Activated CD4-positive, alpha-beta memory T cell treated with anti-CD3 and anti-CD28 coated beads for 36 hours (primary cell): ENCODE measurements at regions of chrX and their contacts with region 1.

Region 1: DNA sequence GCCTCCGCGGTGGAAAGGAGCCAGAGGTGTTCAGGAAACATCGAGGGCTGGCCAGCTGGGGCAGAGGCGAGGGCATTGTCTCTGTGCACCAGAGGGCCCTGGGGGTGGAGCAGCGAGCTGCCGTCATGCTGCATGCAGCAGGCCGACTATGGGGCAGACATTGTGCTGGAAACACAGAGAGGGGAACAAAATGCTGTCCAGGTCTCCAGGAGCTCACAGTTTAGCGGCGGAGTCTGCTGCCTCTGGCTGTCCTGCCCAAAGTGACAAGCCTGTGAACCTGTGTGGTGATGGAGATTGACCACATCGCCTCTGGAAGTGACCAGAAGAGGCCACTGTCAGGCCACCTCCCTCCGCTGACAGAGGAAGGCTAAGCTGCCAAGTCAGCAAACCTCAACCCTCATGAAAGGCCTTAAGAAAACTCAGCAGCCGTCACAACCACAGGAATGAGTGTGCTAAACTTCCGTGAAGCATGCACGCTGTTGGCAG is 20.1 kb upstream of the SASH3 start:
- DNase-seq: peak; percentile 81
- H3K4me3 Mint-ChIP-seq: peak overlapping the region; percentile 46
- H3K27ac Mint-ChIP-seq: peak overlapping the region; percentile 90
- H3K4me1 Mint-ChIP-seq: peaks cover 57% of the 10 kb centered on the region
- H3K27me3 Mint-ChIP-seq: no peaks in the 10 kb centered on the region

Region 2: DNA sequence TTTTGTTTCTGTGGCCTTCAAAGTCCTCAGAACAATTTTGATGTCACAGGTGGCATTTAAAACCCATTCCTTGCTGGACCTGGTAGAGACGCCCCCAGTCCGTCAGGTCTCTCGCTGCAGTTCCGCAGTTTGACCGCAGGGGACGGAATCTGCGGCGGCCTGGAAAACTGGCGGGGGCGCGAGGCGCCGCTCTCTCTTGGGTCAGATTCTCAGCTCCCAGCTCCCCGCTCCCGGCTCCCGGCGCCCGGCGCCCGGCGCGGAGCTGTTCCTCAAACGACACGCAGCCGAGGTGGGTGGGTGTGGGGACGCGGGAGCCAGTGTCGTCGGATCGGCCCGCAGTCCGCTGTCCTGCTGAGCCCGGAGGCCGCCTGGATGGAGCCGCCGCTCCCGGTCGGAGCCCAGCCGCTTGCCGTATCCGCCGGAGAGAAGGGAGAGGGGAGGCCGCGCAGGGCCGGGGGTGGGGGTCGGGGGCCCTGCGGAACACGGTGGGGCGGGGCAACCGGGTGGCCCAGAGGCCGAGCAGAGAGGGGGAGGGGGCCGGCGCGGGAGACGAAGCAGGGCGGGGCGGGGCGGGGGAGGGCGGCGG is 219.5 kb before region 1 on chrX and contains the start of gene OCRL:
- CTCF ChIA-PET with region 1: no interaction called
- POLR2A ChIA-PET with region 1: no interaction called
- intact Hi-C with region 1: no loop called
- DNase-seq: peak; percentile 67
- H3K4me3 Mint-ChIP-seq: peak within 1 kb of the TSS; percentile 71
- H3K27ac Mint-ChIP-seq: no peak within 1 kb of the TSS
- H3K4me1 Mint-ChIP-seq: peaks cover 10% of the 10 kb centered on the region
- H3K27me3 Mint-ChIP-seq: peaks cover 4% of the 10 kb centered on the region
- total RNA-seq, gene OCRL: 2.8 to 3.2 TPM

Region 3: DNA sequence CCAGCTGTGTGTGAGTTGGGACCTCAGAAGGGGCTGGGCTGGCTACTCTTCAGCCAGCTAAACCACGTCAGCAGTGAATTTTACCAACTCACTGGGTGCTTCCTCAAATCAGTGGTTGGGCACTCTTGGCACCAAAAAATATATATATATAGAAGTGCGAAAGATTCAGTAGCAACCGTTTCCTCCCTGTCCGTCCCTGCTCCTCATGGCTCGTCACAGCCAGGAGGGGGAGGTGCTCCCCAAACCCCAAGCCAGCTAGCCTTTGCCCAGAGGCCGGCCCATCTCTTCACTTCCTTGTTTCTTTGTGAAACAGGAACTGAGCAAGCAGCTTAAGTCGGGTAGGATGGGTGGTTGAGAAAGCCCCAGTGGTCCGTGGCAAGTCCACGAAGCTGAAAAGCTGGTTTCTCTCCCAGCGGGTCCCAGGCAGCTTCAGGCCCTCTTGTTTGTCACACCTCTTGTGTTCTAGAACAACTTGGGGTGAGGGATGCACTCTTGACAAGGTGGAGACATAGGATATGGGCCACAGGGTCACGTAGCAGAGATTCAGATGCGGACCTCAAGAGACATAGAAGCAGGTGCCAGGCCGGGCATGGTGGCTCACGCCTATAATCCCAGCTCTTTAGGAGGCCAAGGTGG is 13.3 kb after region 1 on chrX:
- CTCF ChIA-PET with region 1: interaction called, 9 read pairs
- POLR2A ChIA-PET with region 1: interaction called, 58 read pairs
- intact Hi-C with region 1: loop called (anchors 1 kb)
- DNase-seq: peak; percentile 70
- H3K4me3 Mint-ChIP-seq: peak overlapping the region; percentile 48
- H3K27ac Mint-ChIP-seq: peak overlapping the region; percentile 92
- H3K4me1 Mint-ChIP-seq: peaks cover 64% of the 10 kb centered on the region
- H3K27me3 Mint-ChIP-seq: no peaks in the 10 kb centered on the region

Region 4: DNA sequence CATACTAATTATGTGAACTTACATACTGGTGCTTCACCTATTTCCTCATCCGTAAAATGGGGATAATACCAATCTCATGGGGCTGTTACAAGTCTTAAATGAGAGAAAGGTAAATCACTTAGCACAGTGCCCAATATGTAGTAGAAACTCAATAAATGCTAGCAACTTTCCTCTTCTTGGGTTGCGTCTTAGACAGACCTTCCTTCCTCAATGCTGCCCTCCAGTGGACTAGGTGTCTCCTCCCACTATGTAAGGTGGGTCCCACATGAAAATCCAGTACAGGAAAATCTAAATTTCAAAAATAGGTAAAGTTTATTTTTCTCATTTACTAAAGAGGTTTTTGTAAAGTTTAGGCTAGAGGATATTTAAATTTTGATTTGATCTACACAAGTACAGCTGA is 63.5 kb after region 1 on chrX:
- CTCF ChIA-PET with region 1: interaction called, 17 read pairs
- POLR2A ChIA-PET with region 1: no interaction called
- intact Hi-C with region 1: loop called (anchors 1 kb)
- DNase-seq: peak; percentile 46
- H3K4me3 Mint-ChIP-seq: no peak overlapping the region
- H3K27ac Mint-ChIP-seq: peak overlapping the region; percentile 81
- H3K4me1 Mint-ChIP-seq: peaks cover 16% of the 10 kb centered on the region
- H3K27me3 Mint-ChIP-seq: no peaks in the 10 kb centered on the region

Region 5: DNA sequence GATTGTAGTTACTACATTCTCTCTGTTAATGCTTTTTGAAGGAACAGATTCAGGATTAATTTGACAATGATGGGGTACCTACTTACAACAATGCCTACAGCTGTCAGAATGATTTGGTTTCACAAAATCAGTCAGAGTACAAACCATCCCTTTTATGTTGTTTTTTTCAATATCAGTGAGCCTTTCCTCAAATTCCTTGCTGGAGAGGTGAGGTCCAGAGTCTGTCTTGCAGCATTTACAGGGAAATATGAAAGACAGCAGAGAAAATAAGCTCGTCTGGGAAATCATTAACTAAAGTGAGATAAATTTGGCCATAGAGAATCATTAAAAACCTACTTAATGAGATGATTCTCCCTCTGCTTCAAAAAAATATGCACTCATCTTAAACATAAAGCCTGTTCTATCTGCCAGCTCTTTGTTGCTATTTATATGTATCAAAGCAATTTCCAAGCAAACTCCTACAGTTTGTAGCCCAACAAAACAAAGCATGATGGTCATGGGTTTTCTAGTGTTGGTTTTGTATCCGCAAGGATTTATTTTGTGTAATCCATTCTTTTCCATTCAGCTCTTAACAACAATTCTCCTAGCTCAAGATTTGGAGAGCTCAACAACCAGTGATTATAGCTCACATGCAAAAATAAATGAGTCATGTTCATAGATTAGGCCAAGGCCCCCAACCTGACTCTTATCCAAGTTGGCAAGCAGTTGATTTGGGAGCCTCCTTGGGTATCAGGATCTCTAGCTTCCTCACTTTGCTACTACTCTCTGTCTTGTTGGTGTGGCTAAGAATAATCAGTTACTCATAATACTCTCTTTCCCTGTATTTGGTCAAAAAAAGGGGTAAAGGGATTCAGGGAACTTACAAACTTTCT is 920.8 kb after region 1 on chrX:
- CTCF ChIA-PET with region 1: no interaction called
- POLR2A ChIA-PET with region 1: no interaction called
- intact Hi-C with region 1: no loop called
- DNase-seq: no peak
- H3K4me3 Mint-ChIP-seq: no peak overlapping the region
- H3K27ac Mint-ChIP-seq: no peak overlapping the region
- H3K4me1 Mint-ChIP-seq: no peaks in the 10 kb centered on the region
- H3K27me3 Mint-ChIP-seq: no peaks in the 10 kb centered on the region